ENCODE measurements at regions of chr16 and their contacts with region 1.

Region 1: GRCh38 chr16:89720813-89721545 is at the starts of genes VPS9D1 and ZNF276:
- DNase-seq: peak; percentile 66 to 85
- ATAC-seq: peak; percentile 70 to 74
- H3K4me3 ChIP-seq: peak within 1 kb of the TSS; percentile 94
- H3K27ac ChIP-seq: peak within 1 kb of the TSS; percentile 96 to 99
- H3K4me1 ChIP-seq: peaks cover 32% of the 10 kb centered on the region
- CTCF ChIP-seq: no peak
- EP300 ChIP-seq: no peak
- POLR2A ChIP-seq: peak; percentile 58
- RAD21 ChIP-seq: no peak
- polyA plus RNA-seq, gene VPS9D1: 2.1 and 2.7 TPM in 2 replicates
- polyA plus RNA-seq, gene ZNF276: 6.5 and 7.5 TPM in 2 replicates

Region 2: GRCh38 chr16:89706507-89707263 is 14.3 kb before region 1 on chr16:
- CTCF ChIA-PET with region 1: interaction called, 77 read pairs
- POLR2A ChIA-PET with region 1: interaction called, 14 read pairs
- DNase-seq: no peak
- ATAC-seq: no peak
- H3K4me3 ChIP-seq: no peak overlapping the region
- H3K27ac ChIP-seq: peak overlapping the region; percentile 8 to 75; a peak in 4 of 6 replicates
- H3K4me1 ChIP-seq: peaks cover 3% of the 10 kb centered on the region; the same call in 1 of the 3 replicates
- CTCF ChIP-seq: no peak
- EP300 ChIP-seq: no peak
- POLR2A ChIP-seq: no peak
- RAD21 ChIP-seq: no peak

Measured in A549 (cell line).